ENCODE measurements at regions of chr12 and their contacts with region 1.

Region 1: GRCh38 chr12:15584366-15585041 is 204.7 kb downstream of the EPS8 start:
- DNase-seq: peak; percentile 76
- ATAC-seq: peak; percentile 63
- H3K4me3 ChIP-seq: no peak overlapping the region
- H3K4me3 Mint-ChIP-seq: no peak overlapping the region
- H3K27ac ChIP-seq: no peak overlapping the region
- H3K27ac Mint-ChIP-seq: peak overlapping the region; percentile 65
- H3K4me1 ChIP-seq: no peaks in the 10 kb centered on the region
- H3K4me1 Mint-ChIP-seq: no peaks in the 10 kb centered on the region
- H3K27me3 ChIP-seq: no peaks in the 10 kb centered on the region
- H3K27me3 Mint-ChIP-seq: no peaks in the 10 kb centered on the region
- CTCF ChIP-seq: peak; percentile 86

Region 2: GRCh38 chr12:15276088-15276698 is 308.3 kb before region 1 on chr12:
- CTCF ChIA-PET with region 1: interaction called, 20 read pairs
- POLR2A ChIA-PET with region 1: no interaction called
- intact Hi-C with region 1: loop called (anchors 1 kb)
- DNase-seq: peak; percentile 20
- ATAC-seq: no peak
- H3K4me3 ChIP-seq: no peak overlapping the region
- H3K4me3 Mint-ChIP-seq: no peak overlapping the region
- H3K27ac ChIP-seq: no peak overlapping the region
- H3K27ac Mint-ChIP-seq: no peak overlapping the region
- H3K4me1 ChIP-seq: no peaks in the 10 kb centered on the region
- H3K4me1 Mint-ChIP-seq: peaks cover 4% of the 10 kb centered on the region
- H3K27me3 ChIP-seq: peaks cover 0 to 4% (median 0%) of the 10 kb centered on the region in 4 experiments
- H3K27me3 Mint-ChIP-seq: peaks cover 15% of the 10 kb centered on the region
- CTCF ChIP-seq: peak; percentile 75

Region 3: GRCh38 chr12:15563663-15564062 is 20.8 kb before region 1 on chr12:
- CTCF ChIA-PET with region 1: interaction called, 20 read pairs
- POLR2A ChIA-PET with region 1: no interaction called
- intact Hi-C with region 1: no loop called
- DNase-seq: peak; percentile 42
- ATAC-seq: peak; percentile 64
- H3K4me3 ChIP-seq: peak overlapping the region in 4 of 5 experiments; percentile 18 to 51 (median 35)
- H3K4me3 Mint-ChIP-seq: peak overlapping the region; percentile 78
- H3K27ac ChIP-seq: peak overlapping the region; percentile 28 to 46
- H3K27ac Mint-ChIP-seq: peak overlapping the region; percentile 23
- H3K4me1 ChIP-seq: peaks cover 3 to 5% of the 10 kb centered on the region in 2 donors
- H3K4me1 Mint-ChIP-seq: peaks cover 22% of the 10 kb centered on the region
- H3K27me3 ChIP-seq: no peaks in the 10 kb centered on the region
- H3K27me3 Mint-ChIP-seq: no peaks in the 10 kb centered on the region
- CTCF ChIP-seq: no peak